ENCODE measurements at regions of chr1 and their contacts with region 1.

Region 1: GRCh38 chr1:168342572-168343280 is 62.0 kb downstream of the TBX19 start:
- DNase-seq: peak; percentile 54
- CTCF ChIP-seq: peak; percentile 71

Region 2: DNA sequence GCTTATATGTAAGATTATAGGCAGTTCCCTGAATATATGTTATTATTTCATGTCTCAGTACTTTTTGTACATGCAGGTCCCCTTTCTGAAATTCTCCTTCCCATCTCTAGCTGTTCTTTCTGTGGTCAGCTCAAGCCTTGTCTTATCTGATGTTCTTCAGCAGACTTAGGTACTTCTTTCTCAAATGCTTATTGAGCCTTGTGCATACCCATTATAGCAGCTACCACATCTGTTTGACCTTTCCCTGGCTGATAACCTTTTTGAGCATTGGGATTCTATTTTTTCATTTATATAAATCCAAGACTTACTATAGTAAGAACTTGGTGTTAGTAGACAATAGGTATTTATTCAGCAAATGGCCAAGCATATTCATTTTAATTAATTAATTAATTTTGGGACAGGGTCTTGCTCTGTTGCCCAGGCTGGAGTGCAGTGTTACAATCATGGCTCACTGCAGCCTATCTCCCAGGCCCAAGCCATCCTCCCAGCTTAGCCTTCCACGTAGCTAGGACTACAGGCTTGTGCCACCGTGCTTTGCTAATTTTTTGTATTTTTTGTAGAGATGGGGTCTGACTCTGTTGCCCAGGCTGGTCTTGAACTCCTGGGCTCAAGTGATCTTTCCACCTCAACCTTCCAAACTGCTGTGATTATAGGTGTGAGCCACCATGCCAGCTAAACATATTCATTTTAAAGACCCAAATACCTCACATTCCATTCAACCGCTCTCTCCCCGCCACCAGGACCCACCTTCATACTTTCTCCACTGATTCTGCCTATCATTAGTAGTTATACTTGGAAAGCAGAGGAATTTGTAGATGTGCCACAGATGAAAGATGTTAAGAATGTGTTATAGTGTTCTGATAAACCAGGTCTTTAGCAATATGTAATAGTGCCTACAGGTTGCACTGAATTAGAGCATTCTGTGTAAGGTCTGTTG is 147.3 kb before region 1 on chr1:
- in situ Hi-C with region 1: no loop called
- DNase-seq: no peak
- CTCF ChIP-seq: no peak

Region 3: DNA sequence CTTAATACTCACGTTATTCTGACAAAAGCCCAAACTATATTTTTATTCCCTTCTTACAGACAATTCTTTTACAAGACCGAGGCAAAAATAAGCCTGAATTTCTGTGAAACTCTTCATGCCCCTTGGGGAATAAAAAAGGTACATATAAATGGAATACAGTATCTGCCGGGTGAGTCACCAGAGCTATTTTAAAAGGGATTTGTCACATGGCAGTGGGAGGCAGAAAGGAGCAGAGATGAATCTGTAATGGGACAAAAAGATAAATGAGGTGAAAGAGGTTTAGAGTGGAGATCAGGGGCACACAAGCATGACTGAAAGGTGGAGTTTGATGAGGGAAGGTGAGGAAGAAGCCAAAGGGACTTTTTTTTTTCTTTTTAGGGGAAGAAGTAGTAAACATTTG is 242.5 kb after region 1 on chr1:
- in situ Hi-C with region 1: loop called (anchors 25 kb)
- DNase-seq: no peak
- CTCF ChIP-seq: no peak

Measured in GM13976 (cell line).